ENCODE measurements at regions of chr4 and their contacts with region 1.

Region 1: DNA sequence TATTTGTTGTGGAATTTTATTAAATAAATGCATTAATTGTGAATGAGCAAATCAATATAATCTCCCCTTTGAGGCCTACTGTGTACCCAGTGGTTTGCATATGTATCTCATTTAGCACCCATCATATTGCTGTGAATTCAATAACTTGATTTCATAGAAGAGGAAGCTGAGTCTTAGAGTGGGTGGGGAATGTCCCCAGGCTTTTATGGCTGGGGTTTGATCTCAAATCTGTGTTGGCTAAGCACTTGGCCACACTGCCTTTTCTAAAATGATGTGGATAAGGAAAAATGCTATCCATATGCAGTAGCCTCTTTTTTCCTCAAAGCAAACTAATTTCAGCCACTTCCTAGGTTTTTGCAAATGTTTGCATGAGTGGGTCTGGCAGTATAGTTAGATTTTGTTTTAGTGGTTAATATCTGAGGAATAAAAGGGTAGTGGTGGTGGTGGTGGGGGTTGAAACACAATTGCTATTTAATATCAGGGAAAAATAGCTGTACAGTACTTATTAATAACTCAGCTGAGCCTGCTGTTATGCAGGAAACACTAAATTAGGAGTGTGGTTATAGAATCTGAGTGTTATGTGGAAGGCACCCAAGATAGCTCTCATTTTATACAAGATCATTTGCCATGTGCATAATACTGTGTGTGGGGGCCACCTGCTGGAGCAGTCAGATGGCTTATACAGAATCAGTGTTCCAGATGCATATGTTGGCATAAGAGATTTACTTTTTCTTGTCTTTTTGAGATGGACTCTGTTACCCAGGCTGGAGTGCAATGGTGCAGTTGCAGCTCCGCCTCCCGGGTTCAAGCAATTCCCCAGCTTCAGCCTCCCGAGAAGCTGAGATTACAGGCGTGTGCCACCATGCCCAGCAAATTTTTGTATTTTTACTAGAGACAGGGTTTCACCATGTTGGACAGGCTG is 108.0 kb downstream of the TMEM131L start:
- DNase-seq: peak; percentile 64
- ATAC-seq: peak; percentile 95
- H3K4me3 ChIP-seq: no peak overlapping the region
- H3K27ac ChIP-seq: no peak overlapping the region
- H3K4me1 ChIP-seq: peaks cover 5% of the 10 kb centered on the region; the same call in 1 of the 2 replicates
- H3K27me3 ChIP-seq: no peaks in the 10 kb centered on the region
- CTCF ChIP-seq: peak; percentile 73

Region 2: GRCh38 chr4:153204247-153205027 is 369.7 kb before region 1 on chr4 and contains the start of gene TRIM2:
- CTCF ChIA-PET with region 1: no interaction called
- POLR2A ChIA-PET with region 1: no interaction called
- intact Hi-C with region 1: loop called (anchors 5 kb)
- DNase-seq: peak; percentile 70
- ATAC-seq: peak; percentile 14
- H3K4me3 ChIP-seq: peak within 1 kb of the TSS; percentile 59
- H3K27ac ChIP-seq: peak within 1 kb of the TSS; percentile 96
- H3K4me1 ChIP-seq: peaks cover 30% of the 10 kb centered on the region
- H3K27me3 ChIP-seq: no peaks in the 10 kb centered on the region
- CTCF ChIP-seq: no peak
- total RNA-seq, gene TRIM2: 18.9 and 20.2 TPM in 2 replicates

Region 3: DNA sequence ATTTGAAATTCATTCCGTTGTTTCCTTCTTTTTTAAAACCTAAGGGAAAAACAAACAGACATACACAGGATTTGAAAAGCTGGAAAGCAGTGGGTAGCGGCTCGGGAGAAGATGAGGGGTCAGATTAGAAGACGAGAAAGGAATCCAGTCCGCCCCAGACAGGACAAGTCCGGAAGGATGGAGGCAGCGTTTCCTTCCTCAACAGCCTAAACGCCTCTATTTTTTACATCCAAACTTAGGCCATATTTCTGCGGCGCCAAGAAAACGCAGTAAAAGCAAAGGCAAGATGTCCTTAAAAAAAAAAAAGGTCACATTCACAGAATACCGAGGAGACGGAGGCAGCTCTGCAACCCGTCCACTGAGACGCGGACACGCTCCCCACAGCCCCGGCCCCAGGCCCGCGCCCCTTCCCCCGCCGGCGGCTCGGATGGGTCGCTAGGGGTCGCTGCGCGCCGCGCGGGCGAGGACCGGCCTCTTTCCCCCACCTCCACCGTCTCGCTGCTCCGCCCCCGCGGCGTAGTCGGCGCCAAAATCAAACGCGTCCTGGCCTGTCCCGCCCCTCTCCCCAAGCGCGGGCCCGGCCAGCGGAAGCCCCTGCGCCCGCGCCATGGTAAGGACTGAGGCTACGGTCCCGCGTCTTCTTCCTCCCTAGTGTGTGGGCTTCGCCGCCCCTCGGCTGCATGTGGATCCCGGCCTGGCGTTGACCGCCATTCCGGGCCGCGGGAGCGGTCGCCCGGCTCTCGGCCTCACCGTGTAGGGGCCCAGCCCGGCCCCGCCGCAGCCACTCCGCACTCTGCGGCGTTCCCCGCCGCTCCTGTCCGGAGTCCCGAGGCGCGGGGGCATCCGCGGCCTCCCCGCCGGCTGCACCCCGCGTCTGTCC is 229.8 kb before region 1 on chr4 and contains the start of gene MND1:
- CTCF ChIA-PET with region 1: interaction called, 17 read pairs
- POLR2A ChIA-PET with region 1: no interaction called
- intact Hi-C with region 1: loop called (anchors 1 kb)
- DNase-seq: peak; percentile 81
- ATAC-seq: peak; percentile 69
- H3K4me3 ChIP-seq: peak within 1 kb of the TSS; percentile 87
- H3K27ac ChIP-seq: peak within 1 kb of the TSS; percentile 51
- H3K4me1 ChIP-seq: peaks cover 36% of the 10 kb centered on the region
- H3K27me3 ChIP-seq: no peaks in the 10 kb centered on the region
- CTCF ChIP-seq: peak; percentile 78
- total RNA-seq, gene MND1: 7.9 and 8.9 TPM in 2 replicates

Region 4: GRCh38 chr4:153466081-153466948 is 107.8 kb before region 1 on chr4 and contains the start of gene TMEM131L:
- CTCF ChIA-PET with region 1: interaction called, 19 read pairs
- POLR2A ChIA-PET with region 1: interaction called, 4 read pairs
- intact Hi-C with region 1: loop called (anchors 1 kb)
- DNase-seq: peak; percentile 53
- ATAC-seq: peak; percentile 73
- H3K4me3 ChIP-seq: peak within 1 kb of the TSS; percentile 90
- H3K27ac ChIP-seq: peak within 1 kb of the TSS; percentile 88
- H3K4me1 ChIP-seq: peaks cover 20% of the 10 kb centered on the region
- H3K27me3 ChIP-seq: no peaks in the 10 kb centered on the region
- CTCF ChIP-seq: no peak
- total RNA-seq, gene TMEM131L: 7.7 and 10.3 TPM in 2 replicates

Region 5: DNA sequence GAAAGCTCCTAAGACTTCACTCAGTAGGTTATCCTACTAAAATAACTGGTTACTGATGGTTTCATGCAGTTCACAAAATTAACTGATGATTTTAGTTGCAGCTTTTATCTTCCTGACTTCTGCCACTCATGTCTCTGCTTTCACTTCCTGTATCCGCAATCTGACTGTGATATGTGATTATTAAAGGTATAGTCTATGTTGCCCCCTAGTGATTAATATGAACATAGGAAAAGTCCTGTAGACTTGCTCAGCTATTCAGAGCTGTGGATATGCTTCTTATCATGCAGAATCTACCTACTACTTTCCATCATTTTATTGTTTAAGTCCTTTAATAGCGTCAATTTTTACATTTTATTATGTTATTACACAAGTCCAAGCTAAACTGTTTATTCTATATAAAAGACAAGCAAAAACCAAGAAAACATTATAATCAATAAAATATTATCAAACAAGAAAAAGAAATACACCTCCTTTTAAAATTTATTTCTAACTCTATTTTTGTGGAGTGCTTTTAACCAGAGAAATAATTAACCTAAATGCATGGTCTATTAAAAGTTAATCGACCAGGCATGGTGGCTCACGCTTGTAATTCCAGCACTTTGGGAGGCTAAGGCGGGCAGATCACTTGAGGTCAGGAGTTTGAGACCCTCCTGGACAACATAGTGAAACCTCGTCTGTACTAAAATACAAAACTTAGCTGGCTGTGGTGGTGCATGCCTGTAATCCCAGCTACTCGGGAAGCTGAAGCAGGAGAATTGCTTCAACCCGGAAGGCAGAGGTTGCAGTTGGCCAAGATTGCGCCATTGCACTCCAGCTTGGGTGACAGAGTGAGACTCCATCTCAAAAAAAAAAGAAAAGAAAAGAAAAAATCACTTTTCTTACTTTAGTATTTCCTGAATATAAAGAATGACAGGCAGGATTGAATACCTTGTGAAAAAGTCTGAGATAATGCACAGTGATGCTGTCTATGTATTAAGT is 69.6 kb after region 1 on chr4:
- CTCF ChIA-PET with region 1: no interaction called
- POLR2A ChIA-PET with region 1: no interaction called
- intact Hi-C with region 1: loop called (anchors 5 kb)
- DNase-seq: peak; percentile 60
- ATAC-seq: peak; percentile 85
- H3K4me3 ChIP-seq: no peak overlapping the region
- H3K27ac ChIP-seq: no peak overlapping the region
- H3K4me1 ChIP-seq: no peaks in the 10 kb centered on the region
- H3K27me3 ChIP-seq: no peaks in the 10 kb centered on the region
- CTCF ChIP-seq: peak; percentile 64